Sciatic nerve (tissue), 2 donors: ENCODE measurements at regions of chr11 and their contacts with region 1.

Region 1: DNA sequence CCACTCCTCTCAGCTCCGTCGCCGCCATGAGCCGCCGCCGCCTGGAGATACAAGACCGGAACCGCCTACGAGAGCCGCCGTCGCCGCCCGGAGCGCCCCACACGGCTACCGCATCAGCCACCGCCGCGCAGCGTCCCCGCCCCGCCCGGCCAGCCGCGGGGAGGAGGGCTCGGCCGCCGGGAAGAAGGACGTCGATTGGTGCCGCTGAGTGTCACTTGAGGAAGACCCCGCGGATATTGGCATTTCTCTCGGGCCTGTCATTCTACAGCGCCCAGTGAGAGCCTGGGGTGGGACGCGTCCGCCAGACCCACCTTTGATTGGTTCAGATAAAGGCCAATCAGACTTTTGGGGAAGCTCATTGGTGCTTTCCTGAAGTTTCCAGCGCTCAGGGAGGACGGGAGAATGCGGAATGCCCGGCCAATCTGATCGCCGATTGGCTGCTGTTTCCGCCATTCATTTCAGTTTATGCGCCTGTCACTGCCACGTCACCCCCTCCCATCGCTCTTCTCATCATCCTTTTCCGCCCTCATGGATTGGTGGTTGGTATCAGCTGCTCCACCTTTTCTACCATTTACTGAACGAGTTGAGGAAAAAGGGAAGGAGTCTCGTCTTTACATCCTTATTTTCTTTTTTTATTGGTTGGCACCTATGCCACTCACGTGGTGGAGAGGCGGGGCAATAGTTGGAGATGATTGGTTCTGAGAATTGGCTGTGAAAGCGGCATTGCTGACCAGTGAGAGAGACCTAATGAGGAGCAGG is at the start of gene OSBP:
- DNase-seq: peak; percentile 100
- ATAC-seq: peak; percentile 97
- total RNA-seq, gene OSBP: 45.5 TPM

Region 2: GRCh38 chr11:59668950-59669610 is 53.3 kb after region 1 on chr11 and contains the start of gene PATL1:
- intact Hi-C with region 1: loop called (anchors 10 kb)
- DNase-seq: peak; percentile 100
- ATAC-seq: peak; percentile 99
- total RNA-seq, gene PATL1: 37.4 TPM

Region 3: GRCh38 chr11:59767225-59767611 is 151.4 kb after region 1 on chr11:
- intact Hi-C with region 1: no loop called
- DNase-seq: no peak
- ATAC-seq: peak; percentile 34

Region 4: GRCh38 chr11:59822989-59823566 is 207.3 kb after region 1 on chr11:
- intact Hi-C with region 1: no loop called
- DNase-seq: no peak
- ATAC-seq: peak; percentile 62